ENCODE measurements at regions of chr4 and their contacts with region 1.

Region 1: GRCh38 chr4:73341454-73341853 is 62.6 kb upstream of the ALB start:
- DNase-seq: peak in 40 of 42 donors; percentile 12 to 79 (median 58)

Region 2: DNA sequence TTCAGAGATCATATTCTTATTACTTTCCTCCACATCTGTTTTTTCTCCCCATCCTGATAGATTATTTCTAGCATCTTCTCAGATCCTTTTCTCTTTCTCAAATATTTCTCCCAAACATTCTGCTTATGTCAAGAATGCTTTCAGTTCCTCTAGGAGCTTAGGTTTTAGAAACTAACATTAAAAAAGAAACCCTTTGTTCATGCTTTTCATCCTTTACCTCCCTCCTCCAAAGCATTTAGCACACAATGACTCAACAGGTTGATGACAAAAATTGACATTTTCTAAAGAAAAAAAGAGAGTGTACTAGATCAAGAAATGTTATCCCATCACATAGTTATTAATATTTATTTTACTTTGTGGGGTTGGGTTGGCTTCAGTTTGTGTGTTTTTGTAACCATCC is 46.1 kb after region 1 on chr4:
- intact Hi-C with region 1: no loop called
- DNase-seq: no peak

Region 3: GRCh38 chr4:73434311-73434710 is 92.9 kb after region 1 on chr4:
- intact Hi-C with region 1: loop called (anchors 10 kb)
- DNase-seq: no peak

Measured in head of caudate nucleus (tissue), 42 donors.